ENCODE measurements at regions of chr1 and their contacts with region 1.

Region 1: DNA sequence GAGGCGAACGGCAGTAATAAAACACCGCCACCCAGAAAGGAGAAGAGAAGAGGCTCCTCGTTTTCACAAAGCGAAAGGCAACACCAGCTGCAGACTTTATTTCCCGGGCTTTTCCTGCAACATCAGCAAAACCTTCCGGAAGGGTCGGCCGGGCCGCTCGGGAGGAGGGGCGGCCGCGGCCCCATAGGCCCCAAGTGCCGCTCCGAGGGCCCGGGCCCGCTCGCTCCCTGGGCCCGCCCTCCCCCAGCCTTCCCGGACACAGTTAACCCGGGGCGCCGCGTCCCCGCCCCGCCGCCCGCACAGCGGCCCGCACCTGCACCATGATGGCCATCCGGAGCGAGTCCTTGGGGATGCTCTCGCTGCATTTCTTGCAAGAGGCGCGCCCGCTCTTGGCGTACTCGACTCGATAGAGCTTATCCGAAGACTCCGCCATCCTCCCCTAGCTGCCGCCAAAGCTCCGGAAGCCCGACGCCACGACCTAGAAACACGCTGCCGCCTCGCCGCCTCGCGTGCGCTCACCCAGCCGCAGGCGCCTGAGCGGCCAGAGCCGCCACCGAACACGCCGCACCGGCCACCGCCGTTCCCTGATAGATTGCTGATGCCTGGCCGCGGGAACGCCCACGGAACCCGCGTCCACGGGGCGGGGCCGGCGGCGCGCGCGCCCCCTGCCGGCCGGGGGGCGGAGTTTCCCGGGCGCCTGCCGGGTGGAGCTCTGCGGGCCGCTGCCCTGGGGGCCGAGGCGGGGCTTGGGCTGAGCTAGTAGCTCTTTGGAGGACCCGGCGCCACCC is at the start of gene PARP1:
- DNase-seq: peak; percentile 86
- H3K4me3 ChIP-seq: peak within 1 kb of the TSS; percentile 40 to 97 (median 94)
- H3K27ac ChIP-seq: peak within 1 kb of the TSS; percentile 68
- H3K4me1 ChIP-seq: peaks cover 20% of the 10 kb centered on the region
- H3K27me3 ChIP-seq: peaks cover 3 to 5% of the 10 kb centered on the region in 2 experiments
- CTCF ChIP-seq: peak; percentile 43 to 89
- POLR2A ChIP-seq: peak; percentile 60
- total RNA-seq, gene PARP1: 133 and 136 TPM in 2 replicates

Region 2: DNA sequence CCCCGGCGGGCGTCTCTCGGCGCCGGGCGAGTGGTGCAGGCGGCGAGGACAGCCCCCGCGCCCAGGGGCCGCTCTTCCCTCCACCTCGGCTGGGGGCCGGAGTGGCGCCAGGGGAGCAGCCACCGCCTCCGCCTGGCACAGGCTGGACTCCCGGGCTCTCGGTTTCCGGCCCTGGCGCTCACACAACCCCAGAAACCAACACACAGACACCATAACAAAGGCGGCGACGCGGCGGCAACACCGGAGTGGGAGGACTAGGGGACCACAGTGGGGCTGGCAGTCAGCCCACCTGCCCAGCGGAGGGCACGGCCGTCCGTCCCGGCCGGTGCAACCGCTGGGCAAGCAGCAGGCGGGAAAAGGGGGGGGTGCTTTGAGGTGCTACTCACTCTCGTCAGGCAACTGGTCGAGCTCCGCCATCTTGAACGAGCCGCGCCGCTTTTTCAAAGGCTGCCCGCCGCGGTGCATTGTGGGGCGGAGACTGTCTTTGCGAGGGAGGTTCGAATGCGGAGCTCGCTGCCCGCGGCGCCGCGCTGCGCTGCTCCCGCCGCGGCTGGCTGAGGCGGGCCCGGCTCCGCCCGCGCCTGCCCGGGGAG is 98.9 kb before region 1 on chr1 and contains the start of gene LIN9:
- CTCF ChIA-PET with region 1: interaction called, 10 read pairs
- POLR2A ChIA-PET with region 1: no interaction called
- dilution Hi-C with region 1: no loop called
- intact Hi-C with region 1: loop called (anchors 2 kb)
- DNase-seq: peak; percentile 91
- H3K4me3 ChIP-seq: peak within 1 kb of the TSS; percentile 81 to 98 (median 85)
- H3K27ac ChIP-seq: peak within 1 kb of the TSS; percentile 75
- H3K4me1 ChIP-seq: peaks cover 13% of the 10 kb centered on the region
- H3K27me3 ChIP-seq: peaks cover 2 to 4% of the 10 kb centered on the region in 2 experiments
- CTCF ChIP-seq: peak in 1 of 2 donors; percentile 5
- POLR2A ChIP-seq: peak; percentile 54
- total RNA-seq, gene LIN9: 7.6 and 9.4 TPM in 2 replicates

Region 3: GRCh38 chr1:226384065-226384464 is 23.6 kb before region 1 on chr1:
- CTCF ChIA-PET with region 1: interaction called, 10 read pairs
- POLR2A ChIA-PET with region 1: no interaction called
- dilution Hi-C with region 1: no loop called
- intact Hi-C with region 1: no loop called
- DNase-seq: no peak
- H3K4me3 ChIP-seq: no peak overlapping the region
- H3K27ac ChIP-seq: no peak overlapping the region
- H3K4me1 ChIP-seq: no peaks in the 10 kb centered on the region
- H3K27me3 ChIP-seq: no peaks in the 10 kb centered on the region
- CTCF ChIP-seq: no peak
- POLR2A ChIP-seq: no peak

Region 4: DNA sequence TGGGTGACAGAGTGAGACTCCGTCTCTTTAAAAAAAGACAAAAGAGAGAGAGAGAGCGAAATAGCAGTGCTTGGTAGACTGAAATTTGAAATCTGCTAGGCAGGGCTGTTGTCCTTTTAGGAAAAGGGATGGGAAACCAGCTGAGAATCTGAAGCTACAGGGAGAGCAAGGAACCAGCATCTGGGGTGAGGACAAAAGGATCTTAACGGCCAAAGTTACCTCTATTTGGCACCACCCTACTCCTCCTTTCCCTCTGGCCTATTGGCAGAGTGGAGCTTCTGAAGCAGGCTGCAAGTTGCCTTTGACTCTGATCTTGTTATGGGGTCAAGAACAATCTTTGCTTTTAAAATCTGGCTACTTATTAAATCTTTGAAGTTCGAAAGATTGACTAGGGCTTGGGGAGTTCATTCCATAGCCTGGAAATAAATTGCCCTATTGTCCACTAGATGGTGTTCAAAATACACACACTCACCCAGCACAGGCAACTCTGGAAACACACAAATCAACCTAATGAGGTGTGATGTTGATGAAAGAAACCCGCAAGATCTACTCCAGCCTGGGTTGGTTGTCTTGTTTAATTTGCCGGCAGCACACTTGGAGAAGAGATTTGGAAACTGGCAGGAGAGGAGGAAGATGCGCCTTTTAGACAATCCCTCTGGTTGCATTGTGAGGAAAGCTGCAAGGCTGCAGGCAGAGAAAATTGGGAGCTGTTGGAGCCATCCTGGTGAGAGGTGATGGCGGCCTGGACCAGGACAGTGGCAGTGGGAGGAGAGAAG is 16.7 kb after region 1 on chr1:
- CTCF ChIA-PET with region 1: interaction called, 29 read pairs
- POLR2A ChIA-PET with region 1: no interaction called
- dilution Hi-C with region 1: no loop called
- intact Hi-C with region 1: no loop called
- DNase-seq: peak; percentile 24
- H3K4me3 ChIP-seq: no peak overlapping the region
- H3K27ac ChIP-seq: no peak overlapping the region
- H3K4me1 ChIP-seq: no peaks in the 10 kb centered on the region
- H3K27me3 ChIP-seq: peaks cover 5 to 6% of the 10 kb centered on the region in 2 experiments
- CTCF ChIP-seq: peak; percentile 24 to 32
- POLR2A ChIP-seq: no peak

Measured in endothelial cell of umbilical vein (primary cell).